Mammary epithelial cell (primary cell): ENCODE measurements at regions of chr11 and their contacts with region 1.

Region 1: DNA sequence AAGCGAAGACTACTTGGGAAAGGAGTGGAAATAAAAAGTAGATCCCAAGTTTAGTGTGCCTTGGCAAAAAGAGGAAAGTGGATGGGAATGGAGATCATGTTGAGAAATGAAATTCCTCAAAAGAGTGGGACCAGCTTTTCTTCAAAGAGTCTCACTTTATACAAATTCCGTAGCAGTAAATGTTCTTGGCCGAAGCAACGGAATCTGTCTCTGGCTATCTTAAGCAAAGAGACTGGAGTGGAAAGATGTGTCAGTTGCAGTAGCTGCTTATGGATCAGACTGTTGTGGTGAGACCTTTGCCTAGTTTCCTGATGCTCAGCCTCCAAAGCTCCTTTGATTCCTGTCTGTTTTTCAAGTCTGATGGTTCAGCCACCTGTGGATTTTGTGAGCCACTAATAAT is 73.6 kb downstream of the CSTPP1 start:
- DNase-seq: no peak
- H3K4me3 ChIP-seq: no peak overlapping the region
- H3K27ac ChIP-seq: no peak overlapping the region
- H3K4me1 ChIP-seq: no peaks in the 10 kb centered on the region
- H3K27me3 ChIP-seq: no peaks in the 10 kb centered on the region
- CTCF ChIP-seq: no peak

Region 2: DNA sequence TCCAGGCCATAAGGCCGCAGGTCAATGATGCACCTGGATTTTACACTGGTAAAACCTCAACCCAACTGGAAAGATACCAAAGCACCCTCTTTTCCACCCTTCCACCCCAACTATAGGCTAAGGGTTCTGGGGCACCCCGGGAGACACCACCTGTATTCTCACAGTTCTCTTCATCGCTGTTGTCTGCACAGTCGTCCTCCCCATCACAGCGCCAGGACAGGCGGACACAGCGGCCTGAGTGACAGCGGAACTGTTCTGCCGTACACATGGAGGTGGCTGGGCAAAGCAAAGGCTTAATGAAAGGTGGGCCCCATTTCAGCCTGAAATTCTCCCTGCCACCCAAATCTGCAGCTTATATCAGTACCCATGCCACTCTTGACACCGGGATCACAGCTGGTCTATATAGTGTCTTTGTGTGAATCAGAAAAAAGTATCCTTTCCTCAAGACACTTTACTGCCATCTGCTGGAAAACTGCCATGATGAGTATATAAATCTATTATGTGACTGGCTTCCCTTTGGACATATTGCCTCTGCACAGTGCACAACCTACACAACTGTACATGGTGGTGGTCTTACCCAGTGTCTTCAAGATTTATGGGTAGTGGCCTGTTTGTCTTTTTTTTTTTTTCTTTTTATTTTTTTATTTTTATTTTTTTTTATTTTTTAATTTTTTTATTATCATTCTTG is 113.3 kb before region 1 on chr11:
- CTCF ChIA-PET with region 1: no interaction called
- dilution Hi-C with region 1: no loop called
- in situ Hi-C with region 1: no loop called
- intact Hi-C with region 1: no loop called
- DNase-seq: peak; percentile 44
- H3K4me3 ChIP-seq: no peak overlapping the region
- H3K27ac ChIP-seq: no peak overlapping the region
- H3K4me1 ChIP-seq: no peaks in the 10 kb centered on the region
- H3K27me3 ChIP-seq: no peaks in the 10 kb centered on the region
- CTCF ChIP-seq: peak; percentile 37 to 48

Region 3: DNA sequence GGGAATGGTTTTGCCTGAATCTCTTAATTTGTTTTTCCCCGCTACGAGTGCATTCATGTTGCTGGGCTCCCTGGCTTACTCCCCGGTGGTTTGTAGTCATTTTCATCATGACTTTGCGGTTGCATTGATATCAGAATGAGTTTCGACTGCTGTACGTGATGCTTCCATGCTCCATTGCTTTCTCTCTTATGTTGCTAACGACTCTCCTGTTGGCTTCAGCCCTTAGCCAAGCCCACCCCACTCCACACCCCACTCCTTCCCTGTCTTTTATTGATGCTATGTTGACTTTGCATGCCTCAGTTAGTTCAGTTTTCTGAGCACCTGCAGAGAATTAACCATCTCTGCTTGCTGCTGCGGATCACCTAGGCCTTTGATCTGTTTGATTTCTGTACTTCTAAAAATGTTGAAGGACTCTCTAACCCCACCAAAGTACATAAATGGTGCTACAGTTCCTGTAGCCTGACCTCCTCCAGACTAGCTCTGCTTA is 101.2 kb after region 1 on chr11:
- CTCF ChIA-PET with region 1: no interaction called
- dilution Hi-C with region 1: loop called (anchors 5 kb)
- in situ Hi-C with region 1: no loop called
- intact Hi-C with region 1: no loop called
- DNase-seq: no peak
- H3K4me3 ChIP-seq: no peak overlapping the region
- H3K27ac ChIP-seq: no peak overlapping the region
- H3K4me1 ChIP-seq: no peaks in the 10 kb centered on the region
- H3K27me3 ChIP-seq: no peaks in the 10 kb centered on the region
- CTCF ChIP-seq: no peak